Naive thymus-derived CD4-positive, alpha-beta T cell (primary cell): ENCODE measurements at regions of chr6 and their contacts with region 1.

Region 1: GRCh38 chr6:135870722-135871121 is 19.2 kb downstream of the PDE7B start:
- DNase-seq: no peak
- ATAC-seq: no peak
- H3K4me3 ChIP-seq: no peak overlapping the region
- H3K4me3 Mint-ChIP-seq: no peak overlapping the region
- H3K27ac ChIP-seq: no peak overlapping the region
- H3K27ac Mint-ChIP-seq: peak overlapping the region in 7 of 9 donors; percentile 5 to 57 (median 35)
- H3K4me1 ChIP-seq: no peaks in the 10 kb centered on the region
- H3K4me1 Mint-ChIP-seq: peaks cover 3 to 32% (median 19%) of the 10 kb centered on the region in 7 donors
- H3K27me3 ChIP-seq: no peaks in the 10 kb centered on the region
- H3K27me3 Mint-ChIP-seq: no peaks in the 10 kb centered on the region

Region 2: DNA sequence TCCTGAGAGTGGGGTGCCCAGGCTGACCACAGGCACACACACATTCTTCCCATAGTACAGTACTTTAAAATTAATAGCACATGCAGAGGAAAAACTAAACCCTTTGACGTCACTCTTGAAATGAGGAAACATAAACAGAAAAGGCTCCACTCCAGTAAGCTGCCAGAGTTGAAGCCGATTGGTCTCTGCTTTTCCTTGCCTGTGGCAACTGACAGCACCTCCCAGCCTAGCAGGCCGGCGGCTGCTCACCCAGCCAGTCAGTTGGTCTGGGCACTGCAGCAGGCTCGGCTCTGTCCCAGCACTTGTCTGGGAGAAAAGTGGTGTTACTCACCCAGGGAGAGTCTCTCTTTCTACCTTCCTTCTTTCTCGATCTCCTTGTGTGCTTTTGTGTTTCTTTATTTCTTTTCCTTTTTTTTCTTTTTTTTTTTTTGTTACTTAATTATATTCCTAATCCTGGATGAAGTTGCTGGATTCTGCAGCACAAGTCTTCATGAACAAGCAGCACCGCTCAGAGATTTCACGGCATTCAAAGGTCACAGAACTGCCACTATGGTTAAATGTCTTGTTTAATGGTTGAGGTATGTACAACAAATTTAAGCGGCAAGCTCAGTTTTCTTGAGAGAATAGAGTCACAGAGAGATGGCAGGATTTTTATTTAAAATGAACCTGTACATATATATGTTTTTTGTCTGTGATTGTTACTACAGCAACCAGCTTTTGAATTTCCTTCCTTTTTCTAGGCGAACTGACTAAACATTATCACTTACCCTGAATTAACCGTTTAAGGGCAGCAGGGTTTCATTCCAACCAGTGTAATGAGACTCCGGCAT is 19.1 kb before region 1 on chr6 and contains the start of gene PDE7B:
- CTCF ChIA-PET with region 1: interaction called, 3 read pairs
- POLR2A ChIA-PET with region 1: interaction called, 4 read pairs
- intact Hi-C with region 1: loop called in 1 of 2 experiments (anchors 2 kb)
- DNase-seq: peak; percentile 18 to 73 (median 46)
- ATAC-seq: peak; percentile 94
- H3K4me3 ChIP-seq: peak within 1 kb of the TSS; percentile 53
- H3K4me3 Mint-ChIP-seq: peak within 1 kb of the TSS in 9 of 10 donors; percentile 71 to 90 (median 87)
- H3K27ac ChIP-seq: peak within 1 kb of the TSS; percentile 75
- H3K27ac Mint-ChIP-seq: peak within 1 kb of the TSS in 6 of 9 donors; percentile 78 to 96 (median 88)
- H3K4me1 ChIP-seq: peaks cover 0 to 23% of the 10 kb centered on the region in 2 donors
- H3K4me1 Mint-ChIP-seq: peaks cover 5 to 47% (median 36%) of the 10 kb centered on the region in 7 donors
- H3K27me3 ChIP-seq: no peaks in the 10 kb centered on the region
- H3K27me3 Mint-ChIP-seq: no peaks in the 10 kb centered on the region
- total RNA-seq, gene PDE7B: 0.37 to 18.7 (median 1.7) TPM

Region 3: DNA sequence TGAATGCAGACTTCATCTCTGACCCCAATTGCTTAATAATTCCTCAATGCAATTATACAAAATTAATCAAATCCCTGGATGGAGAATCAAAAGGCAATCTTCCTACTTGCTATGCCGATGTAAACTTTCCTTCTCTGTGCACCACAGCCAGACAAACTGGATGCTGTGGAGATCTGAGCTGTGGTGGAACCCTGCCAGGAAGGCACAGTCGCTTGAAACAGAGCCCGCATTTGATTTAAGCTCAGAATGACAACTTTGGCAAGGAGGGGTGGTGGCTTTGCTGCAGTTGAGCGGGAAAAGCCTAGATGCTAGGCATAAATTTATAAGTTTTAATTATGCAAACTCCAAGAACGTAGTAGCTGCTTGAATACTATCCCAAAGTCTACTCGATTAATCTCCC is 188.6 kb after region 1 on chr6:
- CTCF ChIA-PET with region 1: no interaction called
- POLR2A ChIA-PET with region 1: no interaction called
- intact Hi-C with region 1: no loop called
- DNase-seq: no peak
- ATAC-seq: no peak
- H3K4me3 ChIP-seq: no peak overlapping the region
- H3K4me3 Mint-ChIP-seq: no peak overlapping the region
- H3K27ac ChIP-seq: no peak overlapping the region
- H3K27ac Mint-ChIP-seq: no peak overlapping the region
- H3K4me1 ChIP-seq: no peaks in the 10 kb centered on the region
- H3K4me1 Mint-ChIP-seq: no peaks in the 10 kb centered on the region
- H3K27me3 ChIP-seq: no peaks in the 10 kb centered on the region
- H3K27me3 Mint-ChIP-seq: peaks cover 0 to 9% (median 7%) of the 10 kb centered on the region in 5 donors